ENCODE measurements at regions of chr2 and their contacts with region 1.

Region 1: GRCh38 chr2:219689676-219690628 is 62.5 kb downstream of the SLC4A3 start:
- DNase-seq: peak; percentile 65
- ATAC-seq: peak; percentile 37
- H3K4me3 Mint-ChIP-seq: no peak overlapping the region
- H3K27ac Mint-ChIP-seq: no peak overlapping the region
- H3K4me1 Mint-ChIP-seq: peaks cover 16% of the 10 kb centered on the region
- H3K27me3 Mint-ChIP-seq: peaks cover 21% of the 10 kb centered on the region

Region 2: DNA sequence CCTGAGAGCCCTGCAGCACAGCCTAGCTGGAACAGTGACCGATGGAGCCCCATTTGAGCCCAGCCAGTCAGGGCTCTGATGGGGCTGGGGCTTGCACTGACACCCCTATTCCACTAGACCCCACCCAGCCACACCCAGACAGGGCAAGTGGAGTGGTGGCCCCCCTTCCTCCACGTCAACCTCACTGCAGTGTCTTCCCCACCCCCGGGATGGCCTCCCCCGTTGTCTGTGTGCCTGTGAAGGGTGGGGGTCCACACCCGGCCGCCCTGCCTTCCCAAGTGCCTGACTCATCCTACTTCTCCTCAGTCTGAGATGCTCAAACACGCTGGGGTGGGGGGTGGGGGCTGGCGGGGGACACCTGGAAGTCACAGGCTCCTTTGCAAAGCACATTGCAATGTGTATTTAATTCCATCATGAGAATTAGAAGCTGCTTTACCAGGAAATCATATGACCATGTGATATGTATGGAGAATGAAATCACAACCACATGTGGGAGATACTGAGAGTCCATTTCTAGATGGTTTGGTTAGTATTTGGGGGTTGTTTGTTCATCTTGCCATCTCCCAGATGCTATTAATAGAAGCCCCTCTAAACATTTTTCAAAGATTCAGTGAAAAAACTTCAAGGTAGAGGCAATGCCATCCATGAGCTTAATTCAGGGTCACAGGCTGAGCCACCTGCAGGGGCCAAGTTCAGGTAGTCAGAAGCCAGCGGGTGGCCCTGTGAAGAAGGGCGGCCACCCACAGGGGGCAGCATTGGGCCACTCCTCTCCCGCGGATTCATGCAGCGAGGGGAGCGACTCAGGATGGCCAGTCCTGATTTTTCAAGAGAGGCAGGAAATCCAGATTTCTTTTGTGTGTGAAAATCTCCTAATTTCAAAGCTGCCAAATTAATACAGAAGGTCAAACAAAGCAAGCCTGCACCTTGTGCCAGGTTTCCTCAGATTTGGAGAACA is 214.0 kb before region 1 on chr2:
- CTCF ChIA-PET with region 1: no interaction called
- POLR2A ChIA-PET with region 1: no interaction called
- intact Hi-C with region 1: loop called in 1 of 2 experiments (anchors 5 kb)
- DNase-seq: peak; percentile 86
- ATAC-seq: peak; percentile 94
- H3K4me3 Mint-ChIP-seq: no peak overlapping the region
- H3K27ac Mint-ChIP-seq: no peak overlapping the region
- H3K4me1 Mint-ChIP-seq: peaks cover 4% of the 10 kb centered on the region
- H3K27me3 Mint-ChIP-seq: no peaks in the 10 kb centered on the region

Region 3: GRCh38 chr2:219675221-219675620 is 14.7 kb before region 1 on chr2:
- CTCF ChIA-PET with region 1: interaction called, 17 read pairs
- POLR2A ChIA-PET with region 1: no interaction called
- intact Hi-C with region 1: no loop called
- DNase-seq: no peak
- ATAC-seq: no peak
- H3K4me3 Mint-ChIP-seq: no peak overlapping the region
- H3K27ac Mint-ChIP-seq: no peak overlapping the region
- H3K4me1 Mint-ChIP-seq: no peaks in the 10 kb centered on the region
- H3K27me3 Mint-ChIP-seq: peaks cover 16% of the 10 kb centered on the region